Ovary (tissue), 10 donors: ENCODE measurements at regions of chr11 and their contacts with region 1.

Region 1: DNA sequence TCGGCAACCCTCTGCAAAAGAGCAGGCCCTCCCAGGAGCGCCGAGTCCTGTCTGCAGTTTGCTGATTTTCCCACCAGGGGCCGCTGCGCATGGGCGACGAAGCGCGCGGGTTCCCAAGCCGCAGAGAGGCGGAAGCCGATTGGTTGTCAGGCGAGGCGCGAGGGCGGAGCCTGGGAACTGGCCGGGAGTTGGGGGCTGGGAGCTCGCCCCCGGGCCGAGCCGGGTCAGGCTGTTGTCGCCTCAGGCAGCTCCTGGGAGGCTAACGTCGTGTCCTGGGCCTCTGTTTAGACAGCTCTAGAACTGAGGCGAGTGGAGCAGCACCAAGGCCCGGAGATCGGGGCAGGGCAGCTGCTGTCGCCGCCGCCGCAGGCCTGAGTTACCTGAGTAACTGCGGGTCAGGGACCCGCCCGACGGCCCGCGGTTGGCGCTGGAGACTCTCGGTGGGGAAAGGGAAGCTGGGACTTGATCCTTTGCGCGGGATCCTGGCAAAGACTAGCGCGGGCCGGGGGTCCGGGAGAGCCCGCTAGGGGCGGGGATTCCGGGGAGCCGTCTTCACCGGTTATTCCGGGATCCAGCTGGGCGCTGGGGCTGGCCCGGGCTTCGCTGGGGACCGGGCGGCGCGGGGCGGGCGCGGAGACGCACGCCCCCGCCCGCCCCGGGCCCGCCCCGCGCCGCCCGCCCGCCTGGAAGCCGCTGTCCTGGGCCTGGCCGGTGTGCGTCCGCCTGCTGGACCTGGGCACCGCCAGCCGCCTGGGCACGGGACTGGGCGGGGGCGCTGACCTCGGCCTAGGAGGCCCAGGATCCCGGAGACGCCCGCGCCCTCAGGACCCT is at the start of gene STIM1:
- DNase-seq: peak; percentile 93 to 97 (median 95)
- H3K4me3 ChIP-seq: peak within 1 kb of the TSS; percentile 90
- H3K27ac ChIP-seq: peak within 1 kb of the TSS; percentile 68 to 81
- H3K4me1 ChIP-seq: peaks cover 16% of the 10 kb centered on the region
- H3K27me3 ChIP-seq: no peaks in the 10 kb centered on the region
- CTCF ChIP-seq: peak; percentile 98 to 99 (median 98)
- EP300 ChIP-seq: no peak
- POLR2A ChIP-seq: peak; percentile 53
- total RNA-seq, gene STIM1: 26.1 to 68.5 (median 58.7) TPM

Region 2: GRCh38 chr11:3723014-3723708 is 132.0 kb before region 1 on chr11:
- intact Hi-C with region 1: no loop called
- DNase-seq: no peak
- H3K4me3 ChIP-seq: no peak overlapping the region
- H3K27ac ChIP-seq: no peak overlapping the region
- H3K4me1 ChIP-seq: no peaks in the 10 kb centered on the region
- H3K27me3 ChIP-seq: no peaks in the 10 kb centered on the region
- CTCF ChIP-seq: no peak
- EP300 ChIP-seq: no peak
- POLR2A ChIP-seq: no peak

Region 3: GRCh38 chr11:3947061-3947460 is 91.9 kb after region 1 on chr11:
- intact Hi-C with region 1: loop called in 1 of 4 experiments (anchors 10 kb)
- DNase-seq: peak in 2 of 5 donors; percentile 48 to 61
- H3K4me3 ChIP-seq: no peak overlapping the region
- H3K27ac ChIP-seq: peak overlapping the region; percentile 68 to 80
- H3K4me1 ChIP-seq: peaks cover 44% of the 10 kb centered on the region
- H3K27me3 ChIP-seq: no peaks in the 10 kb centered on the region
- CTCF ChIP-seq: no peak
- EP300 ChIP-seq: no peak
- POLR2A ChIP-seq: no peak

Region 4: DNA sequence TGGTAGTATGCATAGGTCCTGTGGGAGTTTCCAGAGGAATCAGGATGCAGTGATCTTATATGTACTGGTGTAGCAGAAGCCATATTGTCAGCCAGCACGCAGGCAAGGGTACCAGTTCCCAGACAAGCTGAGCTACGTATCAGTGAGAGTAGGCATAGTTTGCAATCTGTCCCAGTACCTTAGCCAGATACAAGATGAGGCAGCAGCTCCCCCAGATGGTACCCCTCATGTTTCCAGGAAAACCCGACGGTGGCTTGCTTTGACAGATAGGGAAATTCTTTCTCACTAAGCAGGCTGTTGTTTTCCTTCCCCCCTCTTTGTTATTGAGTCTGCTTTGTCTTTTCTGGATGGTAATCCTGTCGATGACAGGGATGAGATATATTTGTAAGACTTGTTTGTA is 129.7 kb after region 1 on chr11:
- intact Hi-C with region 1: loop called in 3 of 4 experiments (anchors 10 kb)
- DNase-seq: peak in 4 of 5 donors; percentile 35 to 52 (median 45)
- H3K4me3 ChIP-seq: no peak overlapping the region
- H3K27ac ChIP-seq: no peak overlapping the region
- H3K4me1 ChIP-seq: peaks cover 17% of the 10 kb centered on the region
- H3K27me3 ChIP-seq: no peaks in the 10 kb centered on the region
- CTCF ChIP-seq: peak in 1 of 3 donors; percentile 13
- EP300 ChIP-seq: no peak
- POLR2A ChIP-seq: no peak